A673 (cell line): ENCODE measurements at regions of chrX and their contacts with region 1.

Region 1: GRCh38 chrX:8815464-8816065 is 14.4 kb upstream of the FAM9A start:
- DNase-seq: peak; percentile 64
- H3K4me3 ChIP-seq: no peak overlapping the region
- H3K27ac ChIP-seq: no peak overlapping the region
- H3K4me1 ChIP-seq: no peaks in the 10 kb centered on the region
- H3K27me3 ChIP-seq: no peaks in the 10 kb centered on the region
- CTCF ChIP-seq: peak; percentile 78

Region 2: GRCh38 chrX:8748855-8749254 is 66.7 kb before region 1 on chrX:
- CTCF ChIA-PET with region 1: no interaction called
- POLR2A ChIA-PET with region 1: no interaction called
- intact Hi-C with region 1: loop called (anchors 2 kb)
- DNase-seq: peak; percentile 55
- H3K4me3 ChIP-seq: no peak overlapping the region
- H3K27ac ChIP-seq: no peak overlapping the region
- H3K4me1 ChIP-seq: no peaks in the 10 kb centered on the region
- H3K27me3 ChIP-seq: no peaks in the 10 kb centered on the region
- CTCF ChIP-seq: peak; percentile 65